Mammary epithelial cell (primary cell): ENCODE measurements at regions of chr2 and their contacts with region 1.

Region 1: GRCh38 chr2:68251187-68251854 is 1.0 kb downstream of the PPP3R1 start:
- DNase-seq: peak; percentile 84
- H3K4me3 ChIP-seq: peak overlapping the region; percentile 57 to 89 (median 70)
- H3K27ac ChIP-seq: peak overlapping the region; percentile 84
- H3K4me1 ChIP-seq: peaks cover 13% of the 10 kb centered on the region
- H3K27me3 ChIP-seq: no peaks in the 10 kb centered on the region
- CTCF ChIP-seq: peak; percentile 63 to 71

Region 2: DNA sequence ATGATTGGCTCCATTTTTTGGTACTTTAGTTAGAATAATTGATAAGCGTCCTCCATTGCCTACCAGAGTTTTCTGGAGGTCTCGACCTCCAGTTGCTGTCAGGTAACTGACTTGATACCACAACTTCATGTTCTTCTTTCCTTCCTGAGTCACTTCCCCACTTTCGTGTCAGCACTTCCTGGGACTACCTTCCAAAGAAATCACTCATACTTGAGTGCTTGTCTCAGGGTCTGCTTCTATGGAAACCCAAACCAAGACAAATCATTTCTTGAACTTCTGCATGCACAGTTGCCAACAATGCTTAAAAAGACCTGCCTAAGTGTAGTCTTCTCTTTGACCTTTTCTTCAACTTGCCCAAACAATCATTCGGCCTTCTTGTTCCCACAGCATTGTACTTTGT is 1064.5 kb before region 1 on chr2:
- CTCF ChIA-PET with region 1: no interaction called
- dilution Hi-C with region 1: no loop called
- in situ Hi-C with region 1: no loop called
- intact Hi-C with region 1: no loop called
- DNase-seq: peak; percentile 19
- H3K4me3 ChIP-seq: no peak overlapping the region
- H3K27ac ChIP-seq: no peak overlapping the region
- H3K4me1 ChIP-seq: no peaks in the 10 kb centered on the region
- H3K27me3 ChIP-seq: no peaks in the 10 kb centered on the region
- CTCF ChIP-seq: no peak

Region 3: GRCh38 chr2:68157402-68158133 is 93.8 kb before region 1 on chr2 and contains the start of gene PNO1:
- CTCF ChIA-PET with region 1: interaction called, 3 read pairs
- dilution Hi-C with region 1: no loop called
- in situ Hi-C with region 1: no loop called
- intact Hi-C with region 1: loop called (anchors 2 kb)
- DNase-seq: peak; percentile 92
- H3K4me3 ChIP-seq: peak within 1 kb of the TSS; percentile 79 to 95 (median 83)
- H3K27ac ChIP-seq: peak within 1 kb of the TSS; percentile 97
- H3K4me1 ChIP-seq: peaks cover 13% of the 10 kb centered on the region
- H3K27me3 ChIP-seq: no peaks in the 10 kb centered on the region
- CTCF ChIP-seq: no peak
- total RNA-seq, gene PNO1: 18.0 to 21.6 TPM

Region 4: DNA sequence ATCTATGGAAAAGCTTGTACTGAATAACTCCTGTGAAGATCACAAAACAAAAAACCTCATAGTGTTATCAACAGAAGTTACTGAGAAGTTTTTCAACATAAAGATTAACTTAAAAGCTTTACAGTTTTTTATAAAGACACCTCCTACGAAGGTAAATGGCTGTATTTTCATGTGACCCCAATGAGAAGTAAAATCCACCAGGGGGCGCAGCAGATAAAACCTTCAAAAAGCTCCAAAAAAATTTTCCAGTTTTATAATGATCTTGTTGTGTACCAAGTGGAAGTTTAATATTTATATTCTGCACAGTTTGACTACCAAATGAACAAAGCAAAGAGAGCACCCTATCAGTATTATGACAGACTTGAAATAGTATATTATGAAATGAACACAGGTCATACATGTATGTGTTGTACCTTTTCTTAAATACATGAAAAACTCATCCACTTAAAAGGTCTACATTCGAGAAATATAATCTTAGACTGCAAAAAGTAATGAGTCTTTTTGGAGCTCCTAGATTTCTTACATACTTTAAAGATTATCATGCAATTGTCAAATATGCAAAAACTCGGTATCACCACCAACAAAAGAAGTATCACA is 55.1 kb before region 1 on chr2:
- CTCF ChIA-PET with region 1: no interaction called
- dilution Hi-C with region 1: no loop called
- in situ Hi-C with region 1: loop called in 1 of 2 experiments (anchors 10 kb)
- intact Hi-C with region 1: loop called (anchors 1 kb)
- DNase-seq: peak; percentile 27
- H3K4me3 ChIP-seq: no peak overlapping the region
- H3K27ac ChIP-seq: no peak overlapping the region
- H3K4me1 ChIP-seq: peaks cover 21% of the 10 kb centered on the region
- H3K27me3 ChIP-seq: no peaks in the 10 kb centered on the region
- CTCF ChIP-seq: peak; percentile 29 to 46

Region 5: GRCh38 chr2:68225119-68225632 is 26.1 kb before region 1 on chr2:
- CTCF ChIA-PET with region 1: no interaction called
- dilution Hi-C with region 1: no loop called
- in situ Hi-C with region 1: no loop called
- intact Hi-C with region 1: loop called (anchors 2 kb)
- DNase-seq: peak; percentile 57
- H3K4me3 ChIP-seq: no peak overlapping the region
- H3K27ac ChIP-seq: no peak overlapping the region
- H3K4me1 ChIP-seq: no peaks in the 10 kb centered on the region
- H3K27me3 ChIP-seq: no peaks in the 10 kb centered on the region
- CTCF ChIP-seq: peak; percentile 22 to 57

Region 6: DNA sequence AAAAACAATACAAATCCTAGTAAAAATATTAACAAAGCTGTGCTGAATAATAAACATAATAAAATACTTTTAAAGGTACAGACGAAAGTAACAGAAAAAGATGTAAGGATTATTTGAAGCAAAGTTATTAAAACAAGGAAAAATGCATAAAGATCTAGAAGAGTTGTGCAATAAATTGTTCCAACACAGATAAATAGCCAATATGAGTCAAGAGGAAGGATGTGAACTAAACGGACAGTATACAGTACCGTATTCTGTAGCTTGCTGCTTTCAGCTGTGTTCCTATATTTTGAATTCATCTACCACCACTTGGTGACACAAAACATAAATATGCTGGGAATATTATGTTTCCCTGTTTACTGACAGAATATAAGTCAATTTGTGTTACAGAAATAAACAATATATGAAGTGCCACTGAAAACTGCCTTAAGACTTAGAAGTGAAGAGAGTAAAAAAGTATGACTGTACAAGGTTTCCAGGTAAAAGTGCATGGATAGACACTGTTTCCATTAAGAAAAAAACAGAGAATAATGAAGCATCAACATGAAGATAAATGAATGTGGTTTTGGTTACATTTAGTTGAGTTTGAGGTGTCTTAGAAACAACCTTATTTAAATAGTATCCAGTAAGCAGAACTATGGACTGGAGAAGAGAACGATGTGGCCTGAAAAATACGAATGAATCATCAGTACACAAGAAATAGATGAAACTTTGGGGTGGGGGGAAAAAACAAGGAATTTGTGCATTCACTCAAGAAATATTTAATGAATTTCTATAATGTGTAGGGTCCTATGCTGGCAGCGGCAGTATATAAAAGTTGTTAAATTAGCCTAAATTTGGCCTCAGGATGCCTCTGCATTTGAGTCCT is 12.1 kb before region 1 on chr2:
- CTCF ChIA-PET with region 1: no interaction called
- dilution Hi-C with region 1: no loop called
- in situ Hi-C with region 1: no loop called
- intact Hi-C with region 1: no loop called
- DNase-seq: no peak
- H3K4me3 ChIP-seq: no peak overlapping the region
- H3K27ac ChIP-seq: no peak overlapping the region
- H3K4me1 ChIP-seq: peaks cover 20% of the 10 kb centered on the region
- H3K27me3 ChIP-seq: no peaks in the 10 kb centered on the region
- CTCF ChIP-seq: no peak

Region 7: DNA sequence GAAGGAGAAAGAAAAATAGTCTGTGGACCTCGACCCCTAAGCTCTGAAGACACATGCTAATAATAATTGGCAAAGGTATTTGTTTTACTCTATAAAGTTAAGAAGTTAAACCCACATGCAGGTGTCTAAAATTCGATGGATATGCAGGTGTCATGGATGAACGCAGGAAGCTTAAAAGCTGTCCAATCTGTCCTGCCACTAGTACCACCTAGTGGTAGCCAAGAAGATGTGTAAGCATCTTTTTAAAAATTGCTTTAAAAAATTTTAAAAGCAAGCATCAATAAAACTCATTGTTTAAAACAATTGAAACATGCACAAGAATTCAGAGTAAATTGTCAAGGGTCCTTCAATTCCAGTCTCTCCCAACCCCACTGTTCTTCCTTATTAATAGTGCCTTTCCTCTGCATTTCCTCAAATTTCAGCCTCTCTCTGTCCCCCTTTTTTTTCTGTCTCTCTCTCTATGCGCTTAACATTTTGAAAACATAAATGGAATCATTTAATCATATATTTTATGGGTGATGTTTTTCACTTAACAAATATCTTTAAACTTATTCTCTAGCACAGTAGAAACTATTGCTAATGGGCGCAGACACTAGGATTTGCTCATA is 31.6 kb after region 1 on chr2:
- CTCF ChIA-PET with region 1: no interaction called
- dilution Hi-C with region 1: no loop called
- in situ Hi-C with region 1: no loop called
- intact Hi-C with region 1: loop called (anchors 2 kb)
- DNase-seq: peak; percentile 31
- H3K4me3 ChIP-seq: no peak overlapping the region
- H3K27ac ChIP-seq: no peak overlapping the region
- H3K4me1 ChIP-seq: peaks cover 4% of the 10 kb centered on the region
- H3K27me3 ChIP-seq: peaks cover 8% of the 10 kb centered on the region
- CTCF ChIP-seq: peak; percentile 73 to 77